ENCODE measurements at regions of chr11 and their contacts with region 1.

Region 1: GRCh38 chr11:76380967-76381719 is at the starts of genes GVQW3 and THAP12:
- DNase-seq: peak; percentile 96
- H3K4me3 Mint-ChIP-seq: peak within 1 kb of the TSS; percentile 95
- H3K27ac Mint-ChIP-seq: peak within 1 kb of the TSS; percentile 89
- H3K4me1 Mint-ChIP-seq: peaks cover 49% of the 10 kb centered on the region
- H3K27me3 Mint-ChIP-seq: no peaks in the 10 kb centered on the region
- total RNA-seq, gene GVQW3: 4.3 and 4.4 TPM in 2 replicates
- total RNA-seq, gene THAP12: 63.1 and 66.0 TPM in 2 replicates

Region 2: GRCh38 chr11:76025068-76025467 is 356.1 kb before region 1 on chr11:
- intact Hi-C with region 1: no loop called
- DNase-seq: no peak
- H3K4me3 Mint-ChIP-seq: no peak overlapping the region
- H3K27ac Mint-ChIP-seq: no peak overlapping the region
- H3K4me1 Mint-ChIP-seq: peaks cover 15% of the 10 kb centered on the region
- H3K27me3 Mint-ChIP-seq: no peaks in the 10 kb centered on the region

Region 3: DNA sequence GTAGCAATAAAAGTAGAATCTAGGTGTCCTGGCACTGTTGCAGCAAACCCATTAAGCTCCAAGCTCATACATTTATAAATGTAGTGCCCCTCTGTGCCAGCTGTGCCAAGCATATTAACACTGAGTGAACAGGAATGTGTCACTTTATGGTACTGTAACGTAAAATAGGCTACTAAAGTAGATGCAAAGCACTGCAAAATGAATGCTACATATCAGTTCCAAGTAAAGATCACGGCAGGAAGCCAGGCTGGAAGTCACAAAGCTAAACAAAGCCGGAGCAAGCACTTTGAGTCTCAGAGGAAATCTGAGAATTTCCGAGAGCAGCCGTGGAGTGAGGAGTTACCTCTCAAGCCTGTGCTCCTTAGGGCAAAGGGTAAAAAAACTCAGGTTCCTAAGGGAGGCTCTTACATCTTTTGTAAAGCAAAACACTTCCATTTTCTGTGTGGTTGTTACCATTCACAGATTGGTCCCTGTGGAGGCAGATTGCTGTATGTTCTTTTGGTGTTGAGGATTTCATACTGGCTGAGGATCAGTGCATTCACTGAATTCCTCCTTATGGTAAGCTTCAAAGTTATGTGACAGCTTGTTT is 260.5 kb before region 1 on chr11:
- intact Hi-C with region 1: no loop called
- DNase-seq: no peak
- H3K4me3 Mint-ChIP-seq: no peak overlapping the region
- H3K27ac Mint-ChIP-seq: no peak overlapping the region
- H3K4me1 Mint-ChIP-seq: peaks cover 3% of the 10 kb centered on the region
- H3K27me3 Mint-ChIP-seq: no peaks in the 10 kb centered on the region

Region 4: GRCh38 chr11:76444384-76445123 is 63.4 kb after region 1 on chr11 and contains the start of gene EMSY:
- intact Hi-C with region 1: loop called (anchors 1 kb)
- DNase-seq: peak; percentile 93
- H3K4me3 Mint-ChIP-seq: peak within 1 kb of the TSS; percentile 95
- H3K27ac Mint-ChIP-seq: peak within 1 kb of the TSS; percentile 97
- H3K4me1 Mint-ChIP-seq: peaks cover 24% of the 10 kb centered on the region
- H3K27me3 Mint-ChIP-seq: no peaks in the 10 kb centered on the region
- total RNA-seq, gene EMSY: 31.5 and 32.0 TPM in 2 replicates

Measured in activated T-helper 2 cell treated with anti-CD3 and anti-CD28 coated beads, Interferon-gamma antibody, Interleukin-2, Interleukin-4, amounts not matched to agents 10 μg/mL and 5 μg/mL and 100 μg/mL, durations not matched to agents 14 hours and 24 hours and 36 hours (primary cell).